T-cell (primary cell): ENCODE measurements at regions of chr4 and their contacts with region 1.

Region 1: DNA sequence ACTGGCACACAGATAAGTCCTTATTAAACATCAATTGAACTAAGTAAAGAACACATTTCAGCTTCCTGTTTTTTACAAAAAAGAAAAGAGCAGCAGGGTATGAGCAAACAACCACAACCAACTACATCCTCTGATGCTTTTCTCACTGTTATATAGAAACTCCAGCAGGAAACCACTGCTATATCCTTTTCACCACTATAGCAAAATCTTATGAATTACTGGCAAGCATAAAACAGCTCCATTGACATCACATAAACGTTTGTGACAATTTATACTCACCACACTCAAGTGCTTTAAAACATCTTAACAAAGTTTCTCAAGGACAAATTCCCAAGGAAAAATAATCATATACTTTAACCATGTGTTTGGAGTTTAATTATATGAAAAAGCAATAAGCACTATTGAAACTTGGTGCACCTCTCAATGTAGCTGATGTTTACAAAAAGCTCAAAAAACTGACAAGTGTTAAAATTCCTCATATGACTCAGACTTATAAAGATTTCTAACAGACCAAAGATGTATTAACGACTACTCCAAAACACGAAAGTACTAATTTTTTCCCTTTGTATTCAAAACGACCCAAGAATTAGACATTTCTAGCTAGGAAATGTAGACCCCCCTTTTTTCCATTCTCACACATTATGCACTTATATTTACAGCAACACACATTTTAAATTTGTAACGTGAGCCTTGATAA is 12.9 kb downstream of the GPRIN3 start:
- DNase-seq: peak in 2 of 35 experiments; percentile 28 to 80
- ATAC-seq: peak; percentile 80 to 84 (median 82)
- H3K4me3 ChIP-seq: no peak overlapping the region
- H3K4me3 Mint-ChIP-seq: peak overlapping the region; percentile 55 to 63 (median 62)
- H3K27ac ChIP-seq: peak overlapping the region; percentile 92
- H3K27ac Mint-ChIP-seq: peak overlapping the region; percentile 92 to 94
- H3K4me1 ChIP-seq: peaks cover 50 to 80% of the 10 kb centered on the region in 2 experiments
- H3K4me1 Mint-ChIP-seq: peaks cover 88 to 94% (median 90%) of the 10 kb centered on the region in 3 donors
- H3K27me3 ChIP-seq: no peaks in the 10 kb centered on the region
- H3K27me3 Mint-ChIP-seq: no peaks in the 10 kb centered on the region

Region 2: GRCh38 chr4:87390891-87391575 is 1903.7 kb before region 1 on chr4 and contains the start of gene HSD17B11:
- CTCF ChIA-PET with region 1: no interaction called
- POLR2A ChIA-PET with region 1: interaction called in 1 of 2 experiments, 13 read pairs
- DNase-seq: peak; percentile 64 to 90 (median 78)
- ATAC-seq: peak; percentile 98 to 99 (median 98)
- H3K4me3 ChIP-seq: peak within 1 kb of the TSS; percentile 86 to 99
- H3K4me3 Mint-ChIP-seq: peak within 1 kb of the TSS; percentile 93 to 95 (median 94)
- H3K27ac ChIP-seq: peak within 1 kb of the TSS; percentile 82
- H3K27ac Mint-ChIP-seq: peak within 1 kb of the TSS; percentile 92 to 97
- H3K4me1 ChIP-seq: peaks cover 10 to 33% of the 10 kb centered on the region in 2 experiments
- H3K4me1 Mint-ChIP-seq: peaks cover 49 to 62% (median 51%) of the 10 kb centered on the region in 3 donors
- H3K27me3 ChIP-seq: no peaks in the 10 kb centered on the region
- H3K27me3 Mint-ChIP-seq: no peaks in the 10 kb centered on the region
- total RNA-seq, gene HSD17B11: 38.0 to 57.7 (median 51.2) TPM

Region 3: DNA sequence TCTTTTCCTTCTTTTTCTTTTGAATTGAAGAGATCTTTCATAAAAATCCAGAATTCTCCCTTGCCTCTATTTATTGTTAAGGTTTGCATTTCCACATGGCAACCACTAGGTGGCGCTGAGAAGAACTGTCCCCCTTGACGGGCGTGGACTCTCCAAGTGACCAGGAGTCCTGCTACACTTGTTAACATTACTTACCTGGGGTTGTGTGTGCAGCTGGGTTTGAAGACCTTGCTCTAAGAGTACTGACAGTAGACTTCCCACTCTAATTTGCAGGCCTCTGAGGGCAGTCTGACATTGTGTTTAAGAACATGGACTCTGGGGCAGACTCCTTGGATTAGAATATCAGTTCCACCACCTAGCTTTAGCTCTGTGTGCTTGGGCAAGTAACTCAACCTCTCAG is 39.9 kb before region 1 on chr4:
- CTCF ChIA-PET with region 1: interaction called, 4 to 20 read pairs
- POLR2A ChIA-PET with region 1: interaction called, 3 to 7 read pairs
- DNase-seq: peak in 32 of 35 experiments; percentile 2 to 77 (median 32)
- ATAC-seq: peak; percentile 50 to 62 (median 54)
- H3K4me3 ChIP-seq: no peak overlapping the region
- H3K4me3 Mint-ChIP-seq: peak overlapping the region in 1 of 3 donors; percentile 21
- H3K27ac ChIP-seq: peak overlapping the region; percentile 33
- H3K27ac Mint-ChIP-seq: peak overlapping the region; percentile 81 to 89
- H3K4me1 ChIP-seq: peaks cover 14 to 26% of the 10 kb centered on the region in 2 experiments
- H3K4me1 Mint-ChIP-seq: peaks cover 79 to 84% (median 83%) of the 10 kb centered on the region in 3 donors
- H3K27me3 ChIP-seq: no peaks in the 10 kb centered on the region
- H3K27me3 Mint-ChIP-seq: no peaks in the 10 kb centered on the region

Region 4: DNA sequence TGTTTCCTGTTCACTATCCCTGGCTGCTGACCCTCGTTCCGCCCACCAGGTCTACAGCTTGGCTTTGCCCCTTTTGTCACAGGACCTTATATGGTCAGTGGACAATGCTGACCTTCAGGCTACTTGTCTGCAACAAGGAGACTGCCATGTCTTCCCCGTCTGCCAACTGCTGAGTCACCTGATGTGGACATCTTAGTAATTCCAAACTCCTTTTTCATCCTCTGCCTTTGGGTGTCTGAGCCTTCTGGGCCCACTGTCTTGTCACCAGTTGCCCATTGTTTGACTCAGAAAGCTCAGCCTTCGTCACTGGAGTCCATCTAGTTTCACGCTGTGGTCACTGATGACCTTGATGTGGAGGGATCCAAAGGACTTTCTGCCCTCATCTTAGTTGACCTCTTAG is 17.3 kb before region 1 on chr4:
- CTCF ChIA-PET with region 1: interaction called in 1 of 2 experiments, 15 read pairs
- POLR2A ChIA-PET with region 1: interaction called, 4 to 27 read pairs
- DNase-seq: no peak
- ATAC-seq: no peak
- H3K4me3 ChIP-seq: no peak overlapping the region
- H3K4me3 Mint-ChIP-seq: no peak overlapping the region
- H3K27ac ChIP-seq: no peak overlapping the region
- H3K27ac Mint-ChIP-seq: peak overlapping the region in 1 of 2 donors; percentile 33
- H3K4me1 ChIP-seq: peaks cover 0 to 34% of the 10 kb centered on the region in 2 experiments
- H3K4me1 Mint-ChIP-seq: peaks cover 59 to 73% (median 64%) of the 10 kb centered on the region in 3 donors
- H3K27me3 ChIP-seq: no peaks in the 10 kb centered on the region
- H3K27me3 Mint-ChIP-seq: no peaks in the 10 kb centered on the region

Region 5: GRCh38 chr4:89283226-89284009 is 11.3 kb before region 1 on chr4:
- CTCF ChIA-PET with region 1: interaction called, 3 to 15 read pairs
- POLR2A ChIA-PET with region 1: interaction called, 4 to 27 read pairs
- DNase-seq: peak in 33 of 35 experiments; percentile 40 to 79 (median 65)
- ATAC-seq: peak; percentile 79 to 86 (median 82)
- H3K4me3 ChIP-seq: peak overlapping the region in 1 of 2 donors; percentile 22
- H3K4me3 Mint-ChIP-seq: peak overlapping the region; percentile 59 to 68 (median 67)
- H3K27ac ChIP-seq: peak overlapping the region; percentile 94
- H3K27ac Mint-ChIP-seq: peak overlapping the region in 1 of 2 donors; percentile 94
- H3K4me1 ChIP-seq: peaks cover 29 to 48% of the 10 kb centered on the region in 2 experiments
- H3K4me1 Mint-ChIP-seq: peaks cover 67 to 74% (median 69%) of the 10 kb centered on the region in 3 donors
- H3K27me3 ChIP-seq: no peaks in the 10 kb centered on the region
- H3K27me3 Mint-ChIP-seq: no peaks in the 10 kb centered on the region

Region 6: DNA sequence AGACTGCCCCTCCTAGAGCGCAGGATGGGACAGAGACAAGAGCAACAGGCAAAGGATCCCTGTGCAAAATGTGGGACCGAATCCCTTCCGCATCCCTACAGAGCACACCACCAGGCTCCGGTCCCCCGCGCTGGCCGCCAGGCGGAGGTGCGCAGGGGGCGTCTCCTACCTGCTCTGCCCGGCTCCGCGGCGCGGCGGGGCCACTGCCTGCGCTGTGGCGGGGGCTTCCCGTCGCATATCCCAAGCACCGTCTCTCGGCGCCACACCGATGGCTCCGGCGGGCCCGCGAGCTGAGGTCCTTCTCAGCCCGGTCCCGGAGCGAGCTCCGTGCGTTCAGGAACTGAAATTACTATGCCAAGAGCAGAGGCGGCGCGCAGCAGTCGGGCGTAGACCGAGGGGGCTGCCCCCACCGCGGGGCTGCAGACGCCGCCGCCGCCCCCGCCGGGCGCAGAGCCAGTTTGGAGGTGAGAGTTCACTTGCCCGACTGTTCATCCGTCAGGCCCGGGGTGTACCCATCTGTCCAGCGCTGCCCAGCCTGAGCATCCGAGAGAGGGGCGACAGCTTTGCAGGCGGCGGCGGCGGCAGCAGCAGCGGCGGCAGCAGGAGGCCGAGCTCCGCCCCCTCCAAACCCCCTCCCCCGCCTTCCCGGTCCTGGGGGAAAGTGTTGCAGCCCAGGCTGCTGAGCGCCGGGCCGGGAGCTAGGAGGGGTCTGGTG is 12.9 kb after region 1 on chr4 and contains the start of gene GPRIN3:
- CTCF ChIA-PET with region 1: interaction called in 1 of 2 experiments, 10 read pairs
- POLR2A ChIA-PET with region 1: interaction called, 6 to 11 read pairs
- DNase-seq: peak in 34 of 35 experiments; percentile 46 to 80 (median 62)
- ATAC-seq: peak; percentile 65 to 78 (median 73)
- H3K4me3 ChIP-seq: peak within 1 kb of the TSS; percentile 95 to 100
- H3K4me3 Mint-ChIP-seq: peak within 1 kb of the TSS; percentile 90 to 94 (median 90)
- H3K27ac ChIP-seq: peak within 1 kb of the TSS; percentile 88
- H3K27ac Mint-ChIP-seq: peak within 1 kb of the TSS; percentile 92 to 96
- H3K4me1 ChIP-seq: peaks cover 32 to 33% of the 10 kb centered on the region in 2 experiments
- H3K4me1 Mint-ChIP-seq: peaks cover 67 to 74% (median 67%) of the 10 kb centered on the region in 3 donors
- H3K27me3 ChIP-seq: no peaks in the 10 kb centered on the region
- H3K27me3 Mint-ChIP-seq: no peaks in the 10 kb centered on the region
- total RNA-seq, gene GPRIN3: 17.4 to 56.1 (median 23.0) TPM